ENCODE measurements at regions of chr2 and their contacts with region 1.

Region 1: DNA sequence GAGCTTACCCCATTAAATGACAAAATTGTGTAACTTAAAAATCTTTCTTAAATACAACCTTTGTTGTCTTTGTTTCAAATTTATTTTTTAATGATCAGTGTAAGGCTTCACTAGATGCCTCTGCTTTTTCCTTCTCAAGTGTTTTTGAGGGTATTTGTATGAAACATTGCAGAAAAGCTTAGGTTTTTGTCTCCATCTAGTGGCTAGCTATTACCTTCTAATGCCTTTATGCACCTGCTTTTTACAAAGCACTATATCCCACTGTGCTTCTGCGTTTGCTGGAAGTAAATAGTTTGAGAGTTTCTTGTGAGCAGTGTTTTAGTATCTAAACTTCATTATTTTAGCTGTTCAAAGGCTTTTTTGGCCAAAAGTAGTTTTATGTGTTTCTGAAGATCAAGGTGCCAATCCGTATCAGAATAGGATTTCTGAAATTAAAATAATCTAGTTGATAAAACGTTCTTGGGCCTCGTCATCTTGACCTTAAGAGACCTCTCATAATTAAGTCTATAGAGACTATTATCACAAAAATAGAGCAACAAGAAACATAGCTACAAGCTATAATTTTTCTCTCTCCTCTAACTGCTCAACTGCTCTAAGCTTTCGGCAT is 47.0 kb downstream of the IWS1 start:
- DNase-seq: no peak
- H3K4me3 ChIP-seq: no peak overlapping the region
- H3K27ac ChIP-seq: no peak overlapping the region
- H3K4me1 ChIP-seq: peaks cover 3 to 18% (median 7%) of the 10 kb centered on the region in 4 experiments; a peak in 6 of 7 replicates
- H3K27me3 ChIP-seq: no peaks in the 10 kb centered on the region
- CTCF ChIP-seq: peak in 2 of 3 experiments; percentile 58 to 71; a peak in 3 of 4 replicates
- EP300 ChIP-seq: no peak
- POLR2A ChIP-seq: no peak
- RAD21 ChIP-seq: peak; percentile 81 to 82

Region 2: DNA sequence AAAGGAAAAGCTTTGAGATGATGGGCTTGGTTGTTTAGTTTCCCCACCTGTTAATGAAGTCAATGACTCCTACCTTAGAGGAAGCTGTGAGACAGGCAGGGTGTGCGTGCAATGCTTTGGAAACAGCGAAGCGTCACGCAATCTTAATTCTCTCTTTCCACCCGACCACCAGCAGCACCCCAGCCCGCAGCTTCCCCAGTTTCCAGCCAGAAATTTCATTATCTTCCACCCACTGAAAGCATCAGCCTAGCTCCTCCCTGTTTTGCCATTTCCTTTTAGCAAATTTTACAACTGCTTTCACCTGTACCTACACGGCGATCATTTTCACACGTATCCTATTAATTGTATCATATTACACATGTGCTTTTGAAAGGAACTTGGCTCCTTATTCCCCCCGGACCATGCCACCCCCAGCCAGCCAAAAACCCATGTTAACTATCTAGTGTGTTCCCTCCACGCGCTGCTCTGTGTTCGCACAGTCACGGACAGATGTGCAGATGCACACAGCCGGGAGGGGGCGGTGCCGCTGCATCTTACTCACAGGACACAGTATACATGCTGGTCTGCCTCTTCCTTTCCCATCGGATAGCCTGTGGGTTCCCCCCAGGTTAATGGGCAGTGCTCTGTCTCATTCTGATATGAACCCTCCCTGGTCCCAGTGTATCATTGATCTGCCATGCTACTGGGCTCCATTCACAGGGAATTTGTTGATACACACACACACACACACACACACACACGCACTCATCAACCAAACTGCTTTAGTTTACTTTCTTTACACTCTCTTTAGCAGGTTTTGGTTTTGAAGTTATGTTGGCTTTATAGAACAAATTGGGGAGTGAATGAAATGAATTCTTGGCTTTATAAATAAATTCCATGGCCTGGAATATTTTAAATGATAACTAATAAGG is 281.6 kb before region 1 on chr2:
- CTCF ChIA-PET with region 1: interaction called, 11 read pairs
- POLR2A ChIA-PET with region 1: no interaction called
- DNase-seq: peak in 1 of 2 experiments; percentile 86
- H3K4me3 ChIP-seq: no peak overlapping the region
- H3K27ac ChIP-seq: no peak overlapping the region
- H3K4me1 ChIP-seq: peaks cover 0 to 16% (median 9%) of the 10 kb centered on the region in 4 experiments; a peak in 6 of 7 replicates
- H3K27me3 ChIP-seq: no peaks in the 10 kb centered on the region
- CTCF ChIP-seq: peak; percentile 69 to 93 (median 87)
- EP300 ChIP-seq: no peak
- POLR2A ChIP-seq: no peak
- RAD21 ChIP-seq: peak; percentile 83 to 91

Region 3: DNA sequence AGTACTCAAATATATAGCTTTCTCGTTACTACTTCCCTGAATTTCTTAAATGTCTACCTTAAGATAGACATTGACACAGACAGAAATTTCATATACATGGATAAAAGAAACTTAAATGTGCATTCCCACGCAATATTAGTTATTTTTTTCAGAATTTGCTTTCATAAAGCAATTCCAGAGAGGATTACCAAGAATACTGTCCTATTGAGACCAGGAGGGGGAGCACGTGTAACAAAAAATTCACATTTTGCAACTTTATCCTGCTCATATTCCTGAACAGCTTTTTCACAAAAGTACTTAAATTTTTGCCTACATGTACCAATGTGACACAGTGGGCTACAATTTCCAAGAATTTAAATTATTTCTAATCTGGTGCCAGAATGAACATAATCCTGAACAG is 154.7 kb before region 1 on chr2:
- CTCF ChIA-PET with region 1: interaction called, 26 read pairs
- POLR2A ChIA-PET with region 1: no interaction called
- DNase-seq: no peak
- H3K4me3 ChIP-seq: no peak overlapping the region
- H3K27ac ChIP-seq: no peak overlapping the region
- H3K4me1 ChIP-seq: no peaks in the 10 kb centered on the region
- H3K27me3 ChIP-seq: no peaks in the 10 kb centered on the region
- CTCF ChIP-seq: peak in 2 of 3 experiments; percentile 34 to 49; a peak in 2 of 4 replicates
- EP300 ChIP-seq: no peak
- POLR2A ChIP-seq: no peak
- RAD21 ChIP-seq: peak; percentile 62 to 64

Region 4: GRCh38 chr2:127422810-127423475 is 56.4 kb before region 1 on chr2:
- CTCF ChIA-PET with region 1: interaction called, 13 read pairs
- POLR2A ChIA-PET with region 1: no interaction called
- DNase-seq: peak in 1 of 2 experiments; percentile 78
- H3K4me3 ChIP-seq: peak overlapping the region; percentile 57 to 85 (median 59)
- H3K27ac ChIP-seq: no peak overlapping the region
- H3K4me1 ChIP-seq: peaks cover 0 to 13% (median 5%) of the 10 kb centered on the region in 4 experiments; a peak in 5 of 7 replicates
- H3K27me3 ChIP-seq: peaks cover 0 to 29% (median 27%) of the 10 kb centered on the region in 4 experiments; a peak in 6 of 7 replicates
- CTCF ChIP-seq: no peak
- EP300 ChIP-seq: no peak
- POLR2A ChIP-seq: peak in 1 of 2 experiments; percentile 45; a peak in 1 of 3 replicates
- RAD21 ChIP-seq: no peak

Region 5: GRCh38 chr2:127453392-127454171 is 25.7 kb before region 1 on chr2:
- CTCF ChIA-PET with region 1: interaction called, 34 read pairs
- POLR2A ChIA-PET with region 1: interaction called, 4 read pairs
- DNase-seq: peak in 1 of 2 experiments; percentile 51
- H3K4me3 ChIP-seq: no peak overlapping the region
- H3K27ac ChIP-seq: no peak overlapping the region
- H3K4me1 ChIP-seq: peaks cover 11 to 16% (median 14%) of the 10 kb centered on the region in 4 experiments
- H3K27me3 ChIP-seq: no peaks in the 10 kb centered on the region
- CTCF ChIP-seq: peak; percentile 61 to 66 (median 62)
- EP300 ChIP-seq: no peak
- POLR2A ChIP-seq: no peak
- RAD21 ChIP-seq: peak; percentile 79 to 81

Region 6: GRCh38 chr2:127490283-127490682 is 11.0 kb after region 1 on chr2:
- CTCF ChIA-PET with region 1: interaction called, 15 read pairs
- POLR2A ChIA-PET with region 1: interaction called, 4 read pairs
- DNase-seq: no peak
- H3K4me3 ChIP-seq: no peak overlapping the region
- H3K27ac ChIP-seq: no peak overlapping the region
- H3K4me1 ChIP-seq: no peaks in the 10 kb centered on the region
- H3K27me3 ChIP-seq: no peaks in the 10 kb centered on the region
- CTCF ChIP-seq: no peak
- EP300 ChIP-seq: no peak
- POLR2A ChIP-seq: no peak
- RAD21 ChIP-seq: no peak

Measured in H1 (cell line).